Ascending aorta (tissue), 2 donors: ENCODE measurements at regions of chr11 and their contacts with region 1.

Region 1: DNA sequence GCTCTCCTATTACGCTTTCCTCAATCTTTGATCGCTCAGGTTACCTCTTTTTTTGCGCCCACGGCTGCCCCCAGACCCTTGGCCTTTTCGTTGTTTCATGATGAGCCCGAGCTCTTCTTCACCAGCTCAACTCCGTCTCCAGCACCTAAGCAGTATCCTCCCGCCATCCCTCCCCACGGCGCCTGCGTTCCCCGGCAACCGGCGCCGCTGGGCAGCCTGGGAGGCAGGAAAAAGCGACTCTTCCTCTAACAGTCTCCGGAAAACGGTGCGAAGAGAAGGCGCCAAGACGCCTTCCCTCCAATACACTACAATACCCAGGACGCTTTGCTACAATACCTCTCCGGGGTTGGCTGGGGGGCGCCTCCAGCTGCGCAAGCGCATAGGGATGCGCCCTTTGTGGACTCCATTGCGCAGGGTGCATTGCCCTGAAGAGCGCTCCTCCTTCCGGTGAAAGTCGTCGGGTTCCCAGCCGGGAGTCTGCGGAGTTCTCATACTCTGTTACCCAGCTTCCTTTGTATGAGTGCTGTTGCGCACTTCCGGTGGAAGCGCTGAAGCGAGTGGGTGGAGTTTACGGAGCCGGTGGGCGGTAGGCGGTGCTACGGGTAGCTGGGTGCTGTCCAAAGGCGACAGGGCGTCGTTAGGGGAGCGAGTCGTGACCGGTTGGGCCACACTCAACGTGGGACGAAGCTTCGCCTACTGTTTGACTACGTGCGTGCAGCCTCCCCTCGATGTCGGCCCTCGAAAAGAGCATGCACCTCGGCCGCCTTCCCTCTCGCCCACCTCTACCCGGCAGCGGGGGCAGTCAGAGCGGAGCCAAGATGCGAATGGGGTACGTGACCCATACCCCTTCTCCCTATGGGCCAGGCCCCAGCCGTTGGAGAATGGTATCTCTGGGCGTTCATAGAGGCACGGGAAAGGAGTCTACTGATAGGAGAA is at the starts of genes C2CD3 and PPME1:
- DNase-seq: peak; percentile 98 to 100
- H3K4me3 ChIP-seq: peak within 1 kb of the TSS; percentile 90 to 96
- H3K27ac ChIP-seq: peak within 1 kb of the TSS; percentile 94
- H3K4me1 ChIP-seq: peaks cover 12 to 20% of the 10 kb centered on the region in 2 donors
- H3K27me3 ChIP-seq: no peaks in the 10 kb centered on the region
- CTCF ChIP-seq: peak in 2 of 3 experiments; percentile 20 to 25
- total RNA-seq, gene C2CD3: 11.4 TPM
- total RNA-seq, gene PPME1: 29.7 TPM

Region 2: GRCh38 chr11:73876424-73877300 is 294.3 kb before region 1 on chr11 and contains the starts of genes COA4 and PAAF1:
- intact Hi-C with region 1: loop called (anchors 2 kb)
- DNase-seq: peak; percentile 79 to 96
- H3K4me3 ChIP-seq: peak within 1 kb of the TSS; percentile 73 to 86
- H3K27ac ChIP-seq: peak within 1 kb of the TSS; percentile 82 to 86
- H3K4me1 ChIP-seq: peaks cover 3 to 15% of the 10 kb centered on the region in 2 donors
- H3K27me3 ChIP-seq: no peaks in the 10 kb centered on the region
- CTCF ChIP-seq: no peak
- total RNA-seq, gene COA4: 92.7 TPM
- total RNA-seq, gene PAAF1: 36.3 TPM

Region 3: DNA sequence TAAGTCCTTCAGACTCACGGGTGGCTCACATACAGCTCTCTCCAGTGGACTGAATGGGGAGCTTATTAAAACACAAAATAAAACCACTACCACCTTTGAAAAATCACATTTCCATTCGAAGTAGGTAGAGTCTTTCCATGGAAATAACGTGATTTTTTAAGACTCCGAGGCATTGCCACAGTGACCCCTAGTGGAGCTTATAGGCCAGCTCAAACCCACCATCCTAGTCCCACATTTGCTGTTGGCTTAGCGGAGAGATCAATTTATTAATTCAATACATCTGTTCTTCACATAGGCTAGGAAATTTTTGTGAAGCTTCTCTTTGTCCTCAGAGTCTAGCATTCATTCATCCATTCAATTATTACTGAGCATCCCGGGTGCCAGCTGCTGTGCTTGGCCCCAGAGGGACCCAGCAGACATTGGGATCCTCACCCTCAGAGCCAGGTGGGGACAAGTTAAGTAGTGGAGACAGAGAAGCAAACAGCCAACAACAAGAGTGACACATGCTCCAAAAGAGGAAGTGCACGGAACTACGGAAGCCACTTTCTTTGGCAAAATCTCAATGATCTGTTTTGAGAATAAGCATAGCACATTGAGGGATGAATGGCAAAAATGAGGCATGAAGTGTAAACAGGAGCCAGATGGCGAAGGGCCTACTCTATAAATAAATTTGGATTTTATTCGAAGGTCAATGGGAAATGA is 150.7 kb after region 1 on chr11:
- intact Hi-C with region 1: loop called (anchors 5 kb)
- DNase-seq: peak in 1 of 2 donors; percentile 77
- H3K4me3 ChIP-seq: no peak overlapping the region
- H3K27ac ChIP-seq: peak overlapping the region; percentile 7 to 57
- H3K4me1 ChIP-seq: peaks cover 6 to 43% of the 10 kb centered on the region in 2 donors
- H3K27me3 ChIP-seq: no peaks in the 10 kb centered on the region
- CTCF ChIP-seq: peak in 1 of 3 experiments; percentile 60

Region 4: GRCh38 chr11:74492974-74493790 is 322.2 kb after region 1 on chr11 and contains the start of gene LIPT2:
- intact Hi-C with region 1: loop called (anchors 1 kb)
- DNase-seq: peak; percentile 89 to 97
- H3K4me3 ChIP-seq: peak within 1 kb of the TSS; percentile 64 to 95
- H3K27ac ChIP-seq: peak within 1 kb of the TSS; percentile 90 to 99
- H3K4me1 ChIP-seq: peaks cover 0 to 6% of the 10 kb centered on the region in 2 donors
- H3K27me3 ChIP-seq: no peaks in the 10 kb centered on the region
- CTCF ChIP-seq: no peak
- total RNA-seq, gene LIPT2: not detected